IMR-90 (cell line): ENCODE measurements at regions of chr3 and their contacts with region 1.

Region 1: DNA sequence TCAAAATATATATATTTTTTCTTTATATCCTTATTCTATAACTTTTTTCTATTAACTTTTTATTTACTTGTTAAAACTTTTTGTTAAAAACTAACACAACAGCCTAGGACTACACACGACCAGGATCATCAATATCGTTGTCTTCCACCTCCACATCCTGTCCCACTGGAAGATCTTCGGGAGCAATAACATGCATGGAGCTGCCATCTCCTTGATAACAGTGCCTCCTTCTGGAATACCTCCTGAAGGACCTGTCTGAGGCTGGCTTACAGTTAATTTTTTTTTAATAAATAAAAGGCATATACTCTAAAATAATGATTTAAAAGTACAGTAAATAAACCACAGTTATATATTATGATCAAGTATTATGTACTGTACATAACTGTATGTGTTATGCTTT is 58.9 kb downstream of the SFMBT1 start:
- DNase-seq: peak; percentile 70
- ATAC-seq: peak; percentile 68
- H3K4me3 ChIP-seq: no peak overlapping the region
- H3K27ac ChIP-seq: no peak overlapping the region
- H3K4me1 ChIP-seq: no peaks in the 10 kb centered on the region
- H3K27me3 ChIP-seq: no peaks in the 10 kb centered on the region
- CTCF ChIP-seq: peak; percentile 67
- POLR2A ChIP-seq: no peak
- RAD21 ChIP-seq: peak; percentile 81

Region 2: GRCh38 chr3:52934630-52935530 is 52.1 kb before region 1 on chr3:
- CTCF ChIA-PET with region 1: no interaction called
- POLR2A ChIA-PET with region 1: no interaction called
- dilution Hi-C with region 1: no loop called
- in situ Hi-C with region 1: no loop called
- intact Hi-C with region 1: no loop called
- DNase-seq: peak; percentile 64
- ATAC-seq: peak; percentile 97
- H3K4me3 ChIP-seq: no peak overlapping the region
- H3K27ac ChIP-seq: no peak overlapping the region
- H3K4me1 ChIP-seq: no peaks in the 10 kb centered on the region
- H3K27me3 ChIP-seq: no peaks in the 10 kb centered on the region
- CTCF ChIP-seq: peak; percentile 71
- POLR2A ChIP-seq: no peak
- RAD21 ChIP-seq: peak; percentile 66

Region 3: DNA sequence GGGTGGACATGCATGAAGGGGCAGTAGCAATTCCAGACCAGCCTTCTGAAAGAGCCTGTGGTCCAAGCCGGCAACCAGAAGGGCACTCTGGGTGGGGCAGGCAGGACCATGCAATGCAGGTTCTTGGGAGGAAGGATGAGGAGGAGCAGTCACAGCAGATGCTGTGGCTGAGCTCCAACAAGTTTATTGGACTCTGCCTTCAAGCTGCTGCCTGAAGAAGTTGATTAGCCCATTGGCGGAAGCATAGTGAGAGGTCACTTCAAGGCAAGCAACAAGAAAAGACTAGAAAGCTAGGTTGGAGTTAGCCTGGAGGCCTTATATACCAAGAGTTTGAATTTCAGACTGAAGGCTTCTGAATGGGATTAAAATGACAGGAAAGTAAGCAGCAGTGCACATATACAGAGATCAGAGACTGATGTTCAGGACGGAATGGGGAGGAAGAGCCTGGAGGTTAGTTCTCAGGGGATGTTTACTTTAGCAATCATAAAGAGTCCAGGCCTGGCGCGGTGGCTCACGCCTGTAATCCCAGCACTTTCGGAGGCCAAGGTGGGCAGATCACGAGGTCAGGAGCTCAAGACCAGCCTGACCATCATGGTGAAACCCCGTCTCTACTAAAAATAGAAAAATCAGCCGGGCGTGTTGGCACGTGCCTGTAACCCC is 19.0 kb after region 1 on chr3:
- CTCF ChIA-PET with region 1: no interaction called
- POLR2A ChIA-PET with region 1: no interaction called
- dilution Hi-C with region 1: no loop called
- in situ Hi-C with region 1: no loop called
- intact Hi-C with region 1: loop called (anchors 1 kb)
- DNase-seq: no peak
- ATAC-seq: no peak
- H3K4me3 ChIP-seq: no peak overlapping the region
- H3K27ac ChIP-seq: no peak overlapping the region
- H3K4me1 ChIP-seq: no peaks in the 10 kb centered on the region
- H3K27me3 ChIP-seq: no peaks in the 10 kb centered on the region
- CTCF ChIP-seq: no peak
- POLR2A ChIP-seq: no peak
- RAD21 ChIP-seq: no peak